ENCODE measurements at regions of chr15 and their contacts with region 1.

Region 1: DNA sequence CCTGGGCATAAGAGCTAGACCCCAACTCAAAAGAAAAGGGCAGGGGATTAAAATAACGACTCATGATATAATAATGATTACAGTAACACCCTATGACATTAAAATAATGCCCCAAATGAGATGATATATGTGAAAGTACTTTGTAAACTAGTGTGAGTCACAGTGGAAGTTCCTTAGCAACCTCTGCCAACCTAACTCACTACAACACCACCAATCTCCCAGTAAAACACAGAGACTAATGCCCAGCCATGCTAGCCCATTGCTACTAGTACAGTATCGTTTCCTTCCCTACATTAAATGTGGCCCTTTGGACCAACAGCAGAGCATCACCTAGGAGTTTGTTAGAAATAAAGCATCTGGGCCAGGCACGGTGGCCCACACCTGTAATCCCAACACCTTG is 11.2 kb upstream of the ADAMTS7 start:
- DNase-seq: no peak
- ATAC-seq: peak; percentile 53; the same call in 1 of the 2 replicates
- H3K4me3 ChIP-seq: no peak overlapping the region
- H3K27ac ChIP-seq: no peak overlapping the region
- H3K4me1 ChIP-seq: no peaks in the 10 kb centered on the region
- H3K27me3 ChIP-seq: no peaks in the 10 kb centered on the region
- CTCF ChIP-seq: no peak

Region 2: GRCh38 chr15:78552597-78552996 is 269.9 kb before region 1 on chr15:
- CTCF ChIA-PET with region 1: no interaction called
- POLR2A ChIA-PET with region 1: interaction called, 20 read pairs
- intact Hi-C with region 1: no loop called
- DNase-seq: no peak
- ATAC-seq: no peak
- H3K4me3 ChIP-seq: no peak overlapping the region
- H3K27ac ChIP-seq: no peak overlapping the region
- H3K4me1 ChIP-seq: no peaks in the 10 kb centered on the region
- H3K27me3 ChIP-seq: no peaks in the 10 kb centered on the region
- CTCF ChIP-seq: no peak

Region 3: DNA sequence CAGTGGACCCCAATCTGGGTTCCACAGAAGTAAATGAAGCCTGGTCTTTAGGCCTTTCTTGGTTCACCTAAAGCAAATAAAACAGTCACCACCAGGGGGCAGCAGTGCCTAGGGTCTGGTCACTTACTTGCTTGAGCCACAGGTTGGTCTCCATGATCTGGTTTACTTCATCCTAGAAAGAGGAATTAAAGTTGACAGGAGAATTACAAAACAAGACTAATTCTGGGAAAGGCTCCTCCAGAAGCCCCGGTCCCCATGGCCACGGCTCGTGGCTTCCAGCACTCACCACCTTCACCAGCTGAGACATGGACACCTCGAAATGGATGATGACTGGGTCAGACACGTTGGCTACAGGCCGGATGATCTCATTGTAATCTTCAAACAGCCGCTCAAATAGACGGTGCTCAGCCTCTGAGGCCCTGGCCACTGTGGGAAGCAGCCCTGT is 204.0 kb before region 1 on chr15:
- CTCF ChIA-PET with region 1: no interaction called
- POLR2A ChIA-PET with region 1: no interaction called
- intact Hi-C with region 1: no loop called
- DNase-seq: peak; percentile 88
- ATAC-seq: peak; percentile 80
- H3K4me3 ChIP-seq: peak overlapping the region; percentile 19; the same call in 1 of the 2 replicates
- H3K27ac ChIP-seq: no peak overlapping the region
- H3K4me1 ChIP-seq: no peaks in the 10 kb centered on the region
- H3K27me3 ChIP-seq: peaks cover 22% of the 10 kb centered on the region
- CTCF ChIP-seq: peak; percentile 90

Region 4: DNA sequence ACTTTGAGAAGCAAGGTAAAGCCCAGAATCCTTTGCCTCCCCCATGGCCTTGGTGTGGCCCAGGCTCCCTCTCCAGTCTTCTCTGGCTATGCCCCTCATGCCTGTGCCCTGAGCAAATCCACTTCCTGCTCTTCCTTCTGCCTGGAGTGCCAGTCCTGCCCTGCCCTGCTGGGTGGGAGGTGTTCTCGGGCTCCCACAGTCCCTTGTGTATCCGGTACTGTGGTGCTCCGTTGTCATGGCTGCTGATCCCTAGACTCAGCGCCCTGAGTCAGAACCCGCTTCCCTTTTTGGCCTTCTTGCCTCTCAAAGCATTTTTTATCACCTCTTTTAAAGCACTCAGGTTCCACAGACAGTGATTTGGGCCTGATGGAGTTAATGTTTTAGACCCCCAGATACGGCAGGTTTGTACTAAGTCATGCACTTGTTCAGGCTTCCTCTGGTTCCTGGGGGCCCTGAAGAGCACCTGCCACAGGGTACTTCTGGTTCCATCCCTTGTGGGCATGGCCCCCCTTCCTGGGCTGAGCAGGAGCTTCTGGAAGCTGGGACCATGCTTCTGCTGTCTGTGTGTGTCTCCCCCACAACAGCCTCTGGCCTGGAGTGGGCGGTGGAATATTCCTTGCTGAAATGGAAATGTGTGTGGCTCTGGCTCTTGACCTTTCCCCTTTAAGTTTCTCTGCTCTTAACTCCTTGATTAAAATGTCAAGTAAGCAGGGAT is 18.3 kb after region 1 on chr15:
- CTCF ChIA-PET with region 1: no interaction called
- POLR2A ChIA-PET with region 1: no interaction called
- intact Hi-C with region 1: no loop called
- DNase-seq: no peak
- ATAC-seq: no peak
- H3K4me3 ChIP-seq: no peak overlapping the region
- H3K27ac ChIP-seq: no peak overlapping the region
- H3K4me1 ChIP-seq: no peaks in the 10 kb centered on the region
- H3K27me3 ChIP-seq: no peaks in the 10 kb centered on the region
- CTCF ChIP-seq: no peak

Region 5: GRCh38 chr15:78859971-78860732 is 37.6 kb after region 1 on chr15:
- CTCF ChIA-PET with region 1: no interaction called
- POLR2A ChIA-PET with region 1: interaction called, 20 read pairs
- intact Hi-C with region 1: no loop called
- DNase-seq: peak; percentile 90
- ATAC-seq: peak; percentile 89
- H3K4me3 ChIP-seq: peak overlapping the region; percentile 78
- H3K27ac ChIP-seq: peak overlapping the region; percentile 48
- H3K4me1 ChIP-seq: no peaks in the 10 kb centered on the region
- H3K27me3 ChIP-seq: no peaks in the 10 kb centered on the region
- CTCF ChIP-seq: peak; percentile 56